Colonic mucosa (tissue), 4 donors: ENCODE measurements at regions of chr18 and their contacts with region 1.

Region 1: DNA sequence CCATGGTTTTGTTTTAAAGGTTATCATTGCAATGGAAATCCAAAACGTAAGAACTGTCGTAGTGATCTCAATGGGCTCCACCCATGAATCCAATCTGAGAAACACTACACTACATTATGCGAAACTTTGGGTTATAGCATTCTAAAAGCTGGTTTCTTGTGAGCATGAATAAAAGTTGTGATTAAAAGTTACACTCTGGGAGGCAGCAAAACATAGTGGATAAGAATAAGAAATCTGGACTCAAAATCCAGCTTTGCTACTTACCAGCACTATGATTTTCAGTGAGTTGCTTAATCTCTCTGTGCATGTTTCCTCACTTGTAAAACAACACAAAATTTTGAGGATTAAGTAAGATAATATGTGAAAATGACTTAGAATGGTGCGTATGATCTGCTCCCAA is 25.7 kb upstream of the THOC1 start:
- DNase-seq: no peak
- H3K4me3 ChIP-seq: no peak overlapping the region
- H3K27ac ChIP-seq: no peak overlapping the region
- H3K4me1 ChIP-seq: no peaks in the 10 kb centered on the region
- H3K27me3 ChIP-seq: no peaks in the 10 kb centered on the region
- CTCF ChIP-seq: no peak

Region 2: DNA sequence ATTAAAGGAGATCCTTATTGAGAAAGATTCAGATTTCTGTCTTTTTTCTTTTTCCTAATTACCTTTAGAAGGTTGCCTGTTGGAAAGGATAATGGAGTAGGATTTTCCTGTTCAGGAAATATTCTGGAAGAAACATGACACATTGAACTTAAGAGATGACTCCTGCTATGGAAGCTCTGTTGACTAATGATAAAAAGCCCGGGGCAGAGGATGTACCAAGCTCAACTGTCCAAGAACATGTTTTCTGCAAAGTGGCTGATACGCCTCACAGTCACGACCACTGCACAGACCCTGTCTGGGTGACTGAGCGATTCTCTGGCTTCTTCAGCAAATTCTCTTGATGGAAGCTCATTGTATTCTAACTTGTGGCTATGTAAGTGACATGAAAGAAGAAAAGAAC is 60.5 kb after region 1 on chr18:
- intact Hi-C with region 1: no loop called
- DNase-seq: no peak
- H3K4me3 ChIP-seq: no peak overlapping the region
- H3K27ac ChIP-seq: no peak overlapping the region
- H3K4me1 ChIP-seq: no peaks in the 10 kb centered on the region
- H3K27me3 ChIP-seq: no peaks in the 10 kb centered on the region
- CTCF ChIP-seq: no peak

Region 3: DNA sequence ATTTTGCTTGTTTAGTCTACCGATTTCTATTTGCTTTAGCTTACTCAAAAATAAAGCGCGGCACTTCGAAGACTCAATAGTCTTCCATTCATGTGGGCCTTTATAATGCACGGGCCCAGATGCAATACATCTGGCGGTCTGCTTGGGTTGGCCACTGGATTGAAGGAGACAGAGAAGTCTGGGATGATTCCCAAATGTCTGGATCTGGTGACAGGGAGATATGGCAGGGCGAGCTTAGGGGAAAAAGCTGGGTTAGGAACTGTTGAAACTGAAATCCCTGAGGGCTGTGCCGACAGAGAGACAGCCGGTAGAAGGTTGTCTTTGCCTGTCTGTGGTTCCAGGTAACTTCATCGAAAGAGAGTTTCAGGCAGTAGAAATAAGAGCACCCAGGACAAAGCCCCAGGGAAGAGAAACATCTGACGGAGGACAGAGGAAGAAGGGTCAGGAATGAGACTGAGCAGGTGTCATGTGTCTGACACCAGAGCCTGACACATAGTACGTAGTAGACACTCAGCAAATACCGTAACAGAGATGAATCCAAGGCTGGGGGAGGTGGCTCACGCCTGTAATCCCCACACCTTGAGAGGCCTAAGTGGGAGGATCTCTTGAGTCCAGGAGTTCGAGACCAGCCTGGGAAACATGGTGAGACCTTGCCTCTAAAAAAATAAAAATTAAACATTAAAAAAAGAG is 316.8 kb after region 1 on chr18:
- intact Hi-C with region 1: loop called (anchors 5 kb)
- DNase-seq: no peak
- H3K4me3 ChIP-seq: no peak overlapping the region
- H3K27ac ChIP-seq: no peak overlapping the region
- H3K4me1 ChIP-seq: no peaks in the 10 kb centered on the region
- H3K27me3 ChIP-seq: no peaks in the 10 kb centered on the region
- CTCF ChIP-seq: no peak